ENCODE measurements at regions of chr14 and their contacts with region 1.

Region 1: GRCh38 chr14:64891839-64892375 is 12.2 kb upstream of the SPTB start:
- DNase-seq: peak in 1 of 2 experiments; percentile 60
- H3K4me3 ChIP-seq: no peak overlapping the region
- H3K4me3 Mint-ChIP-seq: no peak overlapping the region
- H3K27ac Mint-ChIP-seq: no peak overlapping the region
- H3K4me1 ChIP-seq: no peaks in the 10 kb centered on the region
- H3K4me1 Mint-ChIP-seq: no peaks in the 10 kb centered on the region
- H3K27me3 ChIP-seq: no peaks in the 10 kb centered on the region
- H3K27me3 Mint-ChIP-seq: peaks cover 9% of the 10 kb centered on the region
- CTCF ChIP-seq: peak; percentile 45 to 52

Region 2: DNA sequence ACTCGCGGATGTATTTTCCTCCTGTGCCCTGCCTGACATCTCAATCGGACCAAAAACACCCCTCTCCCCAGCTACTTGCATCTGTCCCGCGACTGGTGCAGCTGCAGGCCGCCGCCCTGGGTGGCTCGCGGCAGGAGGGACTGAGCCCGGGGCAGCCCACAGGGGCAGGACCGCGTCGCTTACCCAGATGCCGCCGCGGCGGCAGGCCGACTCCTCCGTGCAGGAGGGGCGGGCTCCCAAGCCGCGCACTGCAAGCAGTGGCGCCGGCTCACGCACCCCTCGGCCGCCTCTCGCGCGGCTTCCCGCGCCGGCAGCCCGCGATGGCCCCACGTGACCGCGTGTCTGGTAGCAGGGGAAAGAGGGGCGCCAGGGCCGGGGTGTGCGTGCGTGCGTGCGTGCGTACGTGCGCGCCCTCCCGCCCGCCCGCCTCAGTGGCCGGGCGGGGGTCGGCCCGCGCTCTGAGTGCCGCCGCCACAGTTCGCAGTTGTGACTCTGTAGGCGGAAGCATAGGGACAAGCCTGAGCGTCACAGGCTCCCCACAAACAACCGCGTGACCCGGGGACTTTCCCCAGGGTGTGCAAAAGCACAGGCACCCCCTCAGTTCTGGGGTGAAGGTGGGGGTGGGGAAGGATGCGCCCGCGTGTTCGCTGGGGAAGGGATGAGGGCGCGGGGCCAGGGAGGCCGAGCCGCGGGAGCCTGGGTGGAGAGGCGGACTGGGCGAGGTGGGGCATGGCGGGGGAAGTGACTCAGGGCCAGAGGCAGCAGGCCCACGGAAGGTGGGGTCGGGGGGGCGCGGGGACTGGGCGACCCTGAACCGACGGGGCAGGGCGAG is 388.2 kb before region 1 on chr14 and contains the start of gene ZBTB25:
- CTCF ChIA-PET with region 1: no interaction called
- POLR2A ChIA-PET with region 1: no interaction called
- intact Hi-C with region 1: loop called (anchors 10 kb)
- DNase-seq: peak; percentile 93 to 95
- H3K4me3 ChIP-seq: peak within 1 kb of the TSS; percentile 97
- H3K4me3 Mint-ChIP-seq: peak within 1 kb of the TSS; percentile 78
- H3K27ac Mint-ChIP-seq: peak within 1 kb of the TSS; percentile 81
- H3K4me1 ChIP-seq: peaks cover 29% of the 10 kb centered on the region
- H3K4me1 Mint-ChIP-seq: peaks cover 16% of the 10 kb centered on the region
- H3K27me3 ChIP-seq: no peaks in the 10 kb centered on the region
- H3K27me3 Mint-ChIP-seq: no peaks in the 10 kb centered on the region
- CTCF ChIP-seq: no peak
- total RNA-seq, gene ZBTB25: 8.8 and 10.0 TPM in 2 replicates

Region 3: DNA sequence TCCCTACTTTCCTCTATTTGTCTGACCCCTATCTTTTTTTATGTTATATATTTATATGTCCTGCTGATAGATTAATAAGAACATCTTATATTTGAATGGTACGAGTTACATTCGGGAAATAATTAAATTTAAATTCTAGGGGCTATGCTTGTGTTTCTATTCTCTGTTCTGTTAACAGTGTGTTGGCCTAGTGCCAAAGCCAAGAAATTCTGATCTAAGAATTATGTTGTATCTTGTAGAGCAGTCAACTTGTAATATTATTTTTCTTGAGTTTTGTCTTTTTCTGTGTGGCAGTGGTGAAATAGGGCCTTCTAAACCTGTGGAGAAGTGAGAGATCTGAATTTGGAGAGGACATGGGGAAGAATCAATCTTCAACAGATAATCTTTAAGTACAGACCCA is 360.3 kb before region 1 on chr14:
- CTCF ChIA-PET with region 1: no interaction called
- POLR2A ChIA-PET with region 1: no interaction called
- intact Hi-C with region 1: no loop called
- DNase-seq: no peak
- H3K4me3 ChIP-seq: no peak overlapping the region
- H3K4me3 Mint-ChIP-seq: no peak overlapping the region
- H3K27ac Mint-ChIP-seq: no peak overlapping the region
- H3K4me1 ChIP-seq: peaks cover 9% of the 10 kb centered on the region; the same call in 1 of the 2 replicates
- H3K4me1 Mint-ChIP-seq: peaks cover 12% of the 10 kb centered on the region
- H3K27me3 ChIP-seq: no peaks in the 10 kb centered on the region
- H3K27me3 Mint-ChIP-seq: no peaks in the 10 kb centered on the region
- CTCF ChIP-seq: no peak

Region 4: DNA sequence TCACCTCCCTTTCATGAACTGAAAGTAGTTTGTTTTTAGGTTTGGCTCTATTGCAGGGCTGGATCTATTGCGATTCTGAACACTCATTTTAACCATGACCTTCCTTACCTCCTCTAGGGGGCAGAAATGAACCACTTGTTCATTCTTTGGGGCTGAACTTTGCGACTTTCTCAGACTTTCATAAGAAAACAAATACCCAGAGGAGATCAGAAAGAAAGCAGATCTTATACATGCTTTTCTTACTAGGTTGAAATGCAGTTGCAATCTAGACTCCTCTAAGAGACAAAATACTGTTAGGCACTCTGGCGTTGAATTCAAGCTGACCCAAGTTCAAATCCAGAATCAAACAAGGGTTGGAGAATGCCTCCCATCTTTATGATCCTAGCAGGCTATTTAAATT is 220.3 kb before region 1 on chr14:
- CTCF ChIA-PET with region 1: no interaction called
- POLR2A ChIA-PET with region 1: no interaction called
- intact Hi-C with region 1: loop called (anchors 5 kb)
- DNase-seq: peak in 1 of 2 experiments; percentile 55
- H3K4me3 ChIP-seq: no peak overlapping the region
- H3K4me3 Mint-ChIP-seq: no peak overlapping the region
- H3K27ac Mint-ChIP-seq: no peak overlapping the region
- H3K4me1 ChIP-seq: peaks cover 11% of the 10 kb centered on the region; the same call in 1 of the 2 replicates
- H3K4me1 Mint-ChIP-seq: peaks cover 10% of the 10 kb centered on the region
- H3K27me3 ChIP-seq: no peaks in the 10 kb centered on the region
- H3K27me3 Mint-ChIP-seq: no peaks in the 10 kb centered on the region
- CTCF ChIP-seq: peak; percentile 67 to 70

Region 5: DNA sequence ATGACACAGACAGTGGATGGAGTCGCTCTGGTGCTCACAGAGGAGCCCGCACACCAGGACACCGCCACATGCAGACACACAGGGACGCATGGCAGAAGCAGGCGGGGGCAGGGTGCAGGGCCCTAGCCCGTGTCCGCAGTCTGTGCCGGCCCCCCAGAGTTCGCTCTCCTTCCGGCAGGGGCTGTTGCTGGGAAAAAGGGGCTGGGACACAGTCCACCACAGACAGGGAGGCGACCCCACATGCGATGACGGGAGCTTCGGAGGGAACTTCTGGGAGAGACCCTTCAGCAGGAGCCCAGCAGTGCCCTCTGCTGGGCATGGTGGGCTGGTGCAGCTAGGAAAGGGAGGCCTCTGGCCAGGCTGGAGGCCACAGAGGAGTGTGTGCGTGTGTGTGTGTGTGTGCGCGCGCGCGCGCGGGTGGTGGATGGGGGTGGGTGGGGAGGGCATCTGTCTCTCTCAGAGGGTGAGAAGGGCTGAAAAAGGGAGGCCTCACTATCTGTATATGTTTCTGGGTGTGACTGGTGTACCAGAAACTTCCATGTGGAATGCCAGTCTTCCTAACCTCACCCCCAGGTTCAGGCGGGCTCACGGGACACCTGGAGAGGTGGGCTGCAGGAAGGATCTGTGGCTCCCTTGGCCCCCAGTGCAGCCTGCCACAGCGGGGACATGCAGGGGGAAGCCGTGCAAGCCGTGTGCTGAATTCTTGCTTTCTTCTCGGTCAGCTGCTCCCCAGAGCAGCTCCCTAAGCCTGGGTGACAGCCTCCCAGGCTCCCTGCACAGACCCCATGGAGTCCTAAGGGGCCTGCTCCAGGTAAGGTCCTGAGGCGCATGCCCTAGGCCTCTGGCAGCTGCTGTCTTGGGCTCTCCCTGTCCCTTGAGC is 127.0 kb before region 1 on chr14:
- CTCF ChIA-PET with region 1: interaction called, 12 read pairs
- POLR2A ChIA-PET with region 1: no interaction called
- intact Hi-C with region 1: loop called (anchors 5 kb)
- DNase-seq: peak; percentile 76 to 86
- H3K4me3 ChIP-seq: no peak overlapping the region
- H3K4me3 Mint-ChIP-seq: peak overlapping the region; percentile 30
- H3K27ac Mint-ChIP-seq: peak overlapping the region; percentile 19
- H3K4me1 ChIP-seq: peaks cover 37% of the 10 kb centered on the region
- H3K4me1 Mint-ChIP-seq: peaks cover 40% of the 10 kb centered on the region
- H3K27me3 ChIP-seq: no peaks in the 10 kb centered on the region
- H3K27me3 Mint-ChIP-seq: no peaks in the 10 kb centered on the region
- CTCF ChIP-seq: peak; percentile 89 to 93

Region 6: GRCh38 chr14:64792921-64793565 is 98.9 kb before region 1 on chr14:
- CTCF ChIA-PET with region 1: interaction called, 14 read pairs
- POLR2A ChIA-PET with region 1: no interaction called
- intact Hi-C with region 1: no loop called
- DNase-seq: no peak
- H3K4me3 ChIP-seq: no peak overlapping the region
- H3K4me3 Mint-ChIP-seq: no peak overlapping the region
- H3K27ac Mint-ChIP-seq: no peak overlapping the region
- H3K4me1 ChIP-seq: no peaks in the 10 kb centered on the region
- H3K4me1 Mint-ChIP-seq: no peaks in the 10 kb centered on the region
- H3K27me3 ChIP-seq: no peaks in the 10 kb centered on the region
- H3K27me3 Mint-ChIP-seq: no peaks in the 10 kb centered on the region
- CTCF ChIP-seq: no peak

Region 7: GRCh38 chr14:64800000-64800399 is 91.9 kb before region 1 on chr14:
- CTCF ChIA-PET with region 1: interaction called, 10 read pairs
- POLR2A ChIA-PET with region 1: no interaction called
- intact Hi-C with region 1: loop called (anchors 5 kb)
- DNase-seq: peak in 1 of 2 experiments; percentile 42
- H3K4me3 ChIP-seq: no peak overlapping the region
- H3K4me3 Mint-ChIP-seq: no peak overlapping the region
- H3K27ac Mint-ChIP-seq: peak overlapping the region; percentile 37
- H3K4me1 ChIP-seq: no peaks in the 10 kb centered on the region
- H3K4me1 Mint-ChIP-seq: no peaks in the 10 kb centered on the region
- H3K27me3 ChIP-seq: no peaks in the 10 kb centered on the region
- H3K27me3 Mint-ChIP-seq: no peaks in the 10 kb centered on the region
- CTCF ChIP-seq: peak; percentile 38 to 39

Region 8: DNA sequence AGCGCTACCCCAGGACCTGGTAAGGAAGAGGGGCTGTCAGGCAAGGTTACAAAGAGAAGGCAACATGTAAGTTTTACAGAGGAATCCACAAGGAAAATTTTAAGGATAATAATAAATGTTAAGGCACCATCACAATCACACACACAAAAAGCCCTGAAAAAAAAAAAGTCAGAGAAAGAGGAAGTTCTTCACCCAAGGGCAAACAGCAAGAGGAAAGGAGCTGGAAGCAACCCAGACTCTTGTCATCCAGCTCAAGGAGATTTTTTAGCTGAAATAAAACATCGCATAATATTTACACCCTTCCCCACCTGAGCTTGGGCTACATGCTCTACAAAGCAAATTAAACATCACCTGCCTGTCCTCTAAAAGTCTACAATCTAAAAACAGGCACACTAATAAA is 21.7 kb before region 1 on chr14:
- CTCF ChIA-PET with region 1: no interaction called
- POLR2A ChIA-PET with region 1: no interaction called
- intact Hi-C with region 1: no loop called
- DNase-seq: no peak
- H3K4me3 ChIP-seq: no peak overlapping the region
- H3K4me3 Mint-ChIP-seq: no peak overlapping the region
- H3K27ac Mint-ChIP-seq: no peak overlapping the region
- H3K4me1 ChIP-seq: no peaks in the 10 kb centered on the region
- H3K4me1 Mint-ChIP-seq: peaks cover 8% of the 10 kb centered on the region
- H3K27me3 ChIP-seq: no peaks in the 10 kb centered on the region
- H3K27me3 Mint-ChIP-seq: peaks cover 21% of the 10 kb centered on the region
- CTCF ChIP-seq: no peak

Region 9: DNA sequence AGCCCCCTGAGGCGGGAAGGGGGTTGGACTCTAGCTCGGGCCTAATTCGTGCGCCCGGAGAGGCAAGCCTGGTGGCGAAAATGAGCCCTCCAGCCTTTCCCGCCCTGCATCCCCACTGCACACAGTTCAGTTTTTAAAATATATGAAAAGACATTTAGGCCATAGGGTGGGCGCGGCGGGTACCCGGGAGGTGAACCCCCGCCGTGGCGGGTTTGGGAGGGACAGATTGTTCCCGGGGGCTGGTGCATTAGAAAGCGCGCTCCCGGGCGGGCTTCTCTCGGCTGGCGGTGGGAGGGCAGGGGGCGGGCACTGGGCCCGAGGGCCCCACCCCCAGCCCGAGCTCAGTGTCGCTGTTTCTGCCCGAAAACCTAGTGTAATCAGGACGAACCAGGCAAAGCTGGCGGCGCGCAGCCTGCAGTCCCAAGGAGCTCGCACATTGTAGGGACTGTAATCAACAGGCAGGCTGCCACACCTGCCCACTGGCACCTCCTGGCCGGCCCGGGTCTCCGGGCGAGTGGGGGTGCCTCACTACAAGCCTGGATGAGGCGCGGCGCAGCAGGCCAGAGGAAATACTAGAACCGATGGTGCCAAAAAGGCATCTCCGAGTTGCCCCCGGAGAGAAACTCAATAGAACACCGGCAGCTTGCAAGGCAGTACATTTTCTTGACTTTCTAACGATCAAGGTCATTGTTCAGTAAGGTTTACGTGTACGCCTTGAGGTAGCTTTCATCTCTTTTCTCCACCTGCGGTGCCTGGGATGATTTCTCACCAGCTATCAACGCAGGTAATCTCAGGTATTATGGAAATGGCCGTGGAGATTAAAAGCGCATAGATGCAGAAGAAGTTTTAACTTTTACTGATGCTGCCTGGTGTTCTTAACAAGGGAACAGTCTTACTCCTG is 11.4 kb before region 1 on chr14:
- CTCF ChIA-PET with region 1: interaction called, 16 read pairs
- POLR2A ChIA-PET with region 1: no interaction called
- intact Hi-C with region 1: no loop called
- DNase-seq: peak; percentile 51 to 70
- H3K4me3 ChIP-seq: peak overlapping the region; percentile 61
- H3K4me3 Mint-ChIP-seq: peak overlapping the region; percentile 82
- H3K27ac Mint-ChIP-seq: no peak overlapping the region
- H3K4me1 ChIP-seq: no peaks in the 10 kb centered on the region
- H3K4me1 Mint-ChIP-seq: no peaks in the 10 kb centered on the region
- H3K27me3 ChIP-seq: 0 out of 2 replicates have a peak, but pooled peaks cover 1% of the 10 kb centered on the region
- H3K27me3 Mint-ChIP-seq: peaks cover 31% of the 10 kb centered on the region
- CTCF ChIP-seq: peak in 1 of 2 experiments; percentile 11

Region 10: GRCh38 chr14:64926398-64926995 is 34.6 kb after region 1 on chr14:
- CTCF ChIA-PET with region 1: no interaction called
- POLR2A ChIA-PET with region 1: no interaction called
- intact Hi-C with region 1: no loop called
- DNase-seq: no peak
- H3K4me3 ChIP-seq: no peak overlapping the region
- H3K4me3 Mint-ChIP-seq: no peak overlapping the region
- H3K27ac Mint-ChIP-seq: no peak overlapping the region
- H3K4me1 ChIP-seq: no peaks in the 10 kb centered on the region; the same call in 1 of the 2 replicates
- H3K4me1 Mint-ChIP-seq: peaks cover 6% of the 10 kb centered on the region
- H3K27me3 ChIP-seq: no peaks in the 10 kb centered on the region
- H3K27me3 Mint-ChIP-seq: no peaks in the 10 kb centered on the region
- CTCF ChIP-seq: no peak

Region 11: DNA sequence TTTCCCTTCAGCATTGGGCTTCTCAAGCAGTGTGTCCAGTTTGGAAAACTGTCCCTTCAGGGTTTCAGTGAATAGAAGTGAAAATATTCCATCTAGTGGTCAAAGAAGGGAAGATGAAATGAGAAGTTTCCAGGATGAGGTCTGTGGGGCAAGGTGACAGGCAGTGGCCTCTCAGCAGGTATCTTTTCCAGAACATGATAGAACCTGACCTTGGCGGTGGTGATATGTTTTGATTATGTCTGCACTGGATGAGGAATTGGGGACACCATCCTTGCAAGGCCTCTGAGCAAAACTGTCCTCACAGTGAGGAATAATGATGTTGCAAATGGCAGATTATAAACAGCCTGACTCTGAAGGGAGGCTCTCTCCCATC is 45.9 kb after region 1 on chr14:
- CTCF ChIA-PET with region 1: no interaction called
- POLR2A ChIA-PET with region 1: no interaction called
- intact Hi-C with region 1: no loop called
- DNase-seq: no peak
- H3K4me3 ChIP-seq: no peak overlapping the region
- H3K4me3 Mint-ChIP-seq: no peak overlapping the region
- H3K27ac Mint-ChIP-seq: peak overlapping the region; percentile 59
- H3K4me1 ChIP-seq: peaks cover 64% of the 10 kb centered on the region
- H3K4me1 Mint-ChIP-seq: peaks cover 56% of the 10 kb centered on the region
- H3K27me3 ChIP-seq: no peaks in the 10 kb centered on the region
- H3K27me3 Mint-ChIP-seq: no peaks in the 10 kb centered on the region
- CTCF ChIP-seq: no peak

Measured in Caco-2 (cell line).